ENCODE measurements at regions of chr16 and their contacts with region 1.

Region 1: GRCh38 chr16:71883849-71884638 is at the start of gene ZNF821:
- DNase-seq: peak; percentile 79
- H3K4me3 ChIP-seq: peak within 1 kb of the TSS; percentile 78 to 96
- H3K27ac ChIP-seq: peak within 1 kb of the TSS; percentile 94 to 97
- H3K4me1 ChIP-seq: no peaks in the 10 kb centered on the region
- H3K27me3 ChIP-seq: no peaks in the 10 kb centered on the region
- CTCF ChIP-seq: peak in 2 of 4 experiments; percentile 11 to 40
- POLR2A ChIP-seq: peak; percentile 41
- total RNA-seq, gene ZNF821: 20.0 to 26.6 TPM

Region 2: GRCh38 chr16:71723537-71724319 is 160.3 kb before region 1 on chr16:
- intact Hi-C with region 1: loop called (anchors 5 kb)
- DNase-seq: peak; percentile 70
- H3K4me3 ChIP-seq: peak overlapping the region; percentile 71 to 86
- H3K27ac ChIP-seq: peak overlapping the region; percentile 83 to 88
- H3K4me1 ChIP-seq: no peaks in the 10 kb centered on the region
- H3K27me3 ChIP-seq: no peaks in the 10 kb centered on the region
- CTCF ChIP-seq: peak in 2 of 4 experiments; percentile 11 to 31
- POLR2A ChIP-seq: no peak

Region 3: DNA sequence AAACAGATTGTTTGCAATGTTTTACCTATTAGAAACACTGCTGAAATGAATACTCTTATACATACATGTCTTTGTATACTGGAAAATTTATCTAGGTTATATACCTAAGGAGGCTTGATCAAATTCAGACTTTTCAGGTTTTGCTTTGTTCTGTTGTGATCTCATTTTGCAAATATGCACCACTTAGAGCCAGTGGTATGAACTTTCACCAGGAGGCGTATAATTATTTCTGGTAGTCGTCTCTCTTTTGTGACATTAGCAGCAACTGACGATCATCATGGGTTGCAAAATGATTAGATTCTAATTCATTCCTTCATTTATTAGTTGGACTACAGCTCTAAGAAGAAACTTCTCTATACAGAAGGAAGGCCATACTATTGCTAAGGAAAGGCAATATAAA is 102.3 kb before region 1 on chr16:
- intact Hi-C with region 1: no loop called
- DNase-seq: no peak
- H3K4me3 ChIP-seq: no peak overlapping the region
- H3K27ac ChIP-seq: no peak overlapping the region
- H3K4me1 ChIP-seq: no peaks in the 10 kb centered on the region
- H3K27me3 ChIP-seq: no peaks in the 10 kb centered on the region
- CTCF ChIP-seq: no peak
- POLR2A ChIP-seq: no peak

Region 4: DNA sequence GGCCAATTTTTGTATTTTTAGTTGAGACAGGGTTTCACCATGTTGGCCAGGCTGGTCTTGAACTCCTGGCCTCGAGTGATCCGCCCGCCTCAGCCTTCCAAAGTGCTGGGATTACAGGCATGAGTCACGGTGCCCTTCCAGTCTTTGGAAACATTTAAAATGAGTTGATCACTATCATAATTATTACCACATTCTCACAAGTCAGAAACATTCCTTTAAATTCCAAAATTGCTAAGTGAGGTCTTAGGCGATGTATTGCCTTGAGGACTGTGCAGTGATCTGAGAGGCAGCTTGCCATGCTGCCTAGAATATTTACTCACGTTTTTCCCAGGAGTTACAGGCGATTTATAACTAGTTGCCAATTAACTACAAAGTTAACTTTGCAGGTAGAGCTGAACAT is 44.0 kb before region 1 on chr16:
- intact Hi-C with region 1: no loop called
- DNase-seq: no peak
- H3K4me3 ChIP-seq: no peak overlapping the region
- H3K27ac ChIP-seq: no peak overlapping the region
- H3K4me1 ChIP-seq: no peaks in the 10 kb centered on the region
- H3K27me3 ChIP-seq: no peaks in the 10 kb centered on the region
- CTCF ChIP-seq: no peak
- POLR2A ChIP-seq: no peak

Region 5: DNA sequence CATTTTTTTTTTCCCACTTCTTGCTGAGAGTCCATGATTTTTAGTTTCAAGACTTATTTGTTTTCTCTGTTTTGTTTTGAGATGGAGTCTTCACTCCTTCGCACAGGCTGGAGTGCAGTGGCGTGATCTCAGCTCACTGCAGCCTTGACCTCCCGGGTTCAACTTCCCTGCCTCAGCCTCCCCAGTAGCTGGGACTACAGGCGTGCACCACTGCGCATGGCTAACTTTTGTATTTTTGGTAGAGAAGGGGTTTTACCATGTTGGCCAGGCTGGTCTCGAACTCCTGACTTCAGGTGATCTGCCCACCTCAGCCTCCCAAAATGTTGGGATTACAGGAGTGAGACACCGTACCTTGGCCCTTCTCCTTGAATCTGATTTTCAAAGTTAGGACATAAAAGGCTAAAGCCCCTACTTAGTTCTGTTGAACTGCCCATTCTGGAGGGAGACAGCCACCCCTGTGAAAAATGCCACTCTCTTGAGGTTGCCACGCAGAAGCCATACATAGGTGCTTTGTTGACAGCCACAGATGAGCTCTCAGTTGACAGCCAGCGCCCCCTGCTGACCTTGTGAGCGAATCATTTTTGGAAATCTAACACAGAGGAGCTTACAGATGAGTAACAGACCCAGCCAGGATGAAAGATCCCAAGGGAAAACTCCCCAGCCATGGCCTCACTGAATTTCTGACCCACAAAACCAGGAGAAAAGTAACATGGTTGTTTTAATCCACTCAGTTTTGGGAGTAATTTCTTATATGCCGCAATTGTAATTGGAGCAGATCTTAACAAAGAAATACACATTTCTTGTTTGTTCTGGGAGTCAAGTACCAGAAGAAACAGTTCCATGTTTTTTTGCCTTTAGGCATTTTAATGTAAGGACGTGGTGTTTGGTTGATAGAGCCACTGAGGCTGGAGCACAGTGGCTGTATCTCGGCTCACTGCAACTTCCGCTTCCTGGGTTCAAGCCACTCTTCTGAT is 77.3 kb after region 1 on chr16:
- intact Hi-C with region 1: loop called (anchors 5 kb)
- DNase-seq: peak; percentile 80
- H3K4me3 ChIP-seq: no peak overlapping the region
- H3K27ac ChIP-seq: no peak overlapping the region
- H3K4me1 ChIP-seq: no peaks in the 10 kb centered on the region
- H3K27me3 ChIP-seq: no peaks in the 10 kb centered on the region
- CTCF ChIP-seq: peak; percentile 56 to 73 (median 70)
- POLR2A ChIP-seq: no peak